Psoas muscle (tissue), 8 donors: ENCODE measurements at regions of chr10 and their contacts with region 1.

Region 1: GRCh38 chr10:120942806-120943413 is 91.7 kb downstream of the WDR11 start:
- DNase-seq: peak; percentile 74 to 89
- ATAC-seq: peak; percentile 83 to 97 (median 88)
- H3K4me3 ChIP-seq: no peak overlapping the region
- H3K27ac ChIP-seq: no peak overlapping the region
- H3K4me1 ChIP-seq: no peaks in the 10 kb centered on the region
- H3K27me3 ChIP-seq: peaks cover 0 to 5% (median 0%) of the 10 kb centered on the region in 3 donors
- CTCF ChIP-seq: peak; percentile 88

Region 2: GRCh38 chr10:121608469-121609190 is 665.7 kb after region 1 on chr10:
- intact Hi-C with region 1: loop called (anchors 5 kb)
- DNase-seq: peak in 1 of 2 donors; percentile 29
- ATAC-seq: peak in 3 of 4 donors; percentile 52 to 80 (median 79)
- H3K4me3 ChIP-seq: peak overlapping the region; percentile 41
- H3K27ac ChIP-seq: no peak overlapping the region
- H3K4me1 ChIP-seq: no peaks in the 10 kb centered on the region
- H3K27me3 ChIP-seq: peaks cover 0 to 51% (median 6%) of the 10 kb centered on the region in 3 donors
- CTCF ChIP-seq: peak; percentile 65

Region 3: GRCh38 chr10:121734589-121735045 is 791.7 kb after region 1 on chr10:
- intact Hi-C with region 1: loop called (anchors 2 to 5 kb)
- DNase-seq: no peak
- ATAC-seq: no peak
- H3K4me3 ChIP-seq: no peak overlapping the region
- H3K27ac ChIP-seq: no peak overlapping the region
- H3K4me1 ChIP-seq: no peaks in the 10 kb centered on the region
- H3K27me3 ChIP-seq: peaks cover 0 to 8% (median 0%) of the 10 kb centered on the region in 3 donors
- CTCF ChIP-seq: peak; percentile 69

Region 4: DNA sequence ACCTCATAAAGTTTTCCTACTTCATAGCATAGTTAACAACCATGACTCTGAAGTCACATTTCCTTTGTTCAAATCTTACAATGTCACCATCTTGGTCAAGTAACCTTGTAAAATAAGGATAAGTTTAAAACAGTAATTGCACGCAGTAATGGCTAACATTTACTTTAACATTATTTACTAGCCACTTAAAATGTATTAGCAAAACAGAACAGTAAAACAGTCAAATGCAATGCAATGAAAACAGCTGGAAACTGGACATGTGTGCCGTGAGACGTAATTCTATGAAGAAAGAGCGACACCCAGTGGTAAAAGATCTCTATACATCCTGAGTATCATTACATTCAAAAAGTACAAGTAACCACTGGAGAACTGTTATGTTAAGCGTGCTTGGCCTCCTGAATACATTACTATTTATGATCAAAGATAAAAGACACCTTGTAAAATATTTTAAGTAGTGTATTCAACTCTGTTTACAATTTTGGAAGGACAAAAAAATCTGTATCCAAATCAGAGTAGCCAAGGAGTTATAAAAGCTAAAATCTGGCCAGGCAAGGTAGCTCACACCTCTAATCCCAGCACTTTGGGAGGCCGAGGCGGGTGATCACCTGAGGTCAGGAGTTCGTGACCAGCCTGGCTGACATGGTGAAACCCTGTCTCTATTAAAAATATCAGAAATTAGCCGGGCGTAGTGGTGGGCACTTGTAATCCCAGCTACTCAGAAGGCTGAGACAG is 957.7 kb after region 1 on chr10:
- intact Hi-C with region 1: loop called in 1 of 2 experiments (anchors 10 kb)
- DNase-seq: no peak
- ATAC-seq: peak; percentile 51 to 84 (median 74)
- H3K4me3 ChIP-seq: no peak overlapping the region
- H3K27ac ChIP-seq: no peak overlapping the region
- H3K4me1 ChIP-seq: no peaks in the 10 kb centered on the region
- H3K27me3 ChIP-seq: no peaks in the 10 kb centered on the region
- CTCF ChIP-seq: peak; percentile 67